Upper lobe of right lung (tissue), 1 donor: ENCODE measurements at regions of chr1 and their contacts with region 1.

Region 1: GRCh38 chr1:181142096-181142958 is 53.8 kb downstream of the IER5 start:
- DNase-seq: peak; percentile 93
- ATAC-seq: peak; percentile 97
- H3K4me3 ChIP-seq: peak overlapping the region; percentile 34
- H3K27ac ChIP-seq: no peak overlapping the region
- H3K4me1 ChIP-seq: peaks cover 27% of the 10 kb centered on the region
- H3K27me3 ChIP-seq: no peaks in the 10 kb centered on the region
- CTCF ChIP-seq: peak; percentile 98

Region 2: DNA sequence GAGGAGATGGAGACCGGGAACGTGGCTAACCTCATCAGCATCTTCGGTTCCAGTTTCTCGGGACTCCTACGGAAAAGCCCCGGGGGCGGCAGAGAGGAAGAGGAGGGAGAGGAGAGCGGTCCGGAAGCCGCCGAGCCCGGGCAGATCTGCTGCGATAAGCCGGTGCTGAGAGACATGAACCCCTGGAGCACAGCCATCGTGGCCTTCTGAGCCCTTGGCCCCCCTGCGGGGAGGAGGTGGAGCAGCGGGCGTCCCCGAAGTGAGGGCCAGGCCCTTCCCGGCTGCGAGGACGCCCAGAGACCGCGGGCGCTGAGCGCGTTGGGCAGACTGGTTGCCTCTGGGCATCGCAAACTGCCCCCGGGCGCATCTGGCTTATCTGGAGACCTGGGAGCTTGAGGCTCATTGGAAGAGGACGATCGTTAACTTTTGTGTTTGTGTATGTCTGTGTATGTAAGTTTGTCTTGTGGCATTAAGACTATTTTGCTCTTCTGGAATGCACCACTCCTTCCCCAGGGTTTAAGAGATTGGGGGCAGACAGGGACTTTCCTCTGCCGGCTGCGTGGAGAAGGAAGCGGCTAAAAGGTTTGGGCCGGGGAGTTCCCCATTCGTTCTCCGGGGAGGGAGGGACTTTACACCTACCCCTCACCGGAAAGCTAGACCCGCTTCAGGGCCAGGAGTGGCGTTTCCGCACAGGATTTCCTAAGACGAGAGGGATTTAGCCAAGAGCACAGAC is 52.5 kb before region 1 on chr1:
- intact Hi-C with region 1: loop called (anchors 5 kb)
- DNase-seq: peak; percentile 88
- ATAC-seq: peak; percentile 62
- H3K4me3 ChIP-seq: peak overlapping the region; percentile 88
- H3K27ac ChIP-seq: peak overlapping the region; percentile 90
- H3K4me1 ChIP-seq: peaks cover 20% of the 10 kb centered on the region
- H3K27me3 ChIP-seq: no peaks in the 10 kb centered on the region
- CTCF ChIP-seq: peak; percentile 12